H1 (cell line): ENCODE measurements at regions of chr11 and their contacts with region 1.

Region 1: GRCh38 chr11:72483412-72484186 is 49.3 kb upstream of the CLPB start:
- DNase-seq: no peak
- H3K4me3 ChIP-seq: no peak overlapping the region
- H3K27ac ChIP-seq: no peak overlapping the region
- H3K4me1 ChIP-seq: no peaks in the 10 kb centered on the region
- H3K27me3 ChIP-seq: no peaks in the 10 kb centered on the region
- CTCF ChIP-seq: no peak
- EP300 ChIP-seq: no peak
- POLR2A ChIP-seq: no peak
- RAD21 ChIP-seq: no peak

Region 2: DNA sequence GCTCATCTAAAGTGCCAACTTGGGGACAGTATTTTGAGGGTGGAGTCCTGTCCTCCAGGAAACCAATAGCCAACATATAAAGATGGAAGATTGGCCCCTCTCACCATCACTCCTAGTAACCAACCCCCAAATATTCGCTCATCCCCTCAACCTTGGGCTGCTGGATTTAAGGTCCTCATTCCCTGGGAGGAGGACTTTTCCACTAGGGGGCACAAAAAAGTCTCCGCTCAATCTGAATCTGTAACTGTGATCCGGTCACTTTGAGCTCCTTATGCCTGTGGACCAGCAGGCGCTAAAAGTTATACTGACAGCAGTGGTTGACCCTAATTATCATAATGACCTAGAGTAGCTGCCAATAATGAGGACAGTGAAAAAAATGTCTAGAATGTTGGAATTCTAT is 28.8 kb before region 1 on chr11:
- CTCF ChIA-PET with region 1: interaction called, 18 read pairs
- POLR2A ChIA-PET with region 1: no interaction called
- DNase-seq: no peak
- H3K4me3 ChIP-seq: no peak overlapping the region
- H3K27ac ChIP-seq: no peak overlapping the region
- H3K4me1 ChIP-seq: no peaks in the 10 kb centered on the region
- H3K27me3 ChIP-seq: no peaks in the 10 kb centered on the region; a peak in 3 of 7 replicates
- CTCF ChIP-seq: peak; percentile 38 to 56 (median 43)
- EP300 ChIP-seq: no peak
- POLR2A ChIP-seq: no peak
- RAD21 ChIP-seq: peak; percentile 12 to 44; a peak in 2 of 4 replicates